Heart left ventricle (tissue), 16 donors: ENCODE measurements at regions of chr14 and their contacts with region 1.

Region 1: GRCh38 chr14:67240978-67241414 is 239 bp upstream of the PALS1 start:
- DNase-seq: peak; percentile 97 to 98 (median 98)
- ATAC-seq: peak; percentile 98 to 99 (median 99)
- H3K4me3 ChIP-seq: peak overlapping the region; percentile 74 to 98 (median 91)
- H3K27ac ChIP-seq: peak overlapping the region; percentile 92 to 99 (median 96)
- H3K4me1 ChIP-seq: peaks cover 0 to 23% (median 10%) of the 10 kb centered on the region in 12 donors
- H3K27me3 ChIP-seq: no peaks in the 10 kb centered on the region
- CTCF ChIP-seq: no peak
- POLR2A ChIP-seq: peak in 1 of 2 donors; percentile 65

Region 2: DNA sequence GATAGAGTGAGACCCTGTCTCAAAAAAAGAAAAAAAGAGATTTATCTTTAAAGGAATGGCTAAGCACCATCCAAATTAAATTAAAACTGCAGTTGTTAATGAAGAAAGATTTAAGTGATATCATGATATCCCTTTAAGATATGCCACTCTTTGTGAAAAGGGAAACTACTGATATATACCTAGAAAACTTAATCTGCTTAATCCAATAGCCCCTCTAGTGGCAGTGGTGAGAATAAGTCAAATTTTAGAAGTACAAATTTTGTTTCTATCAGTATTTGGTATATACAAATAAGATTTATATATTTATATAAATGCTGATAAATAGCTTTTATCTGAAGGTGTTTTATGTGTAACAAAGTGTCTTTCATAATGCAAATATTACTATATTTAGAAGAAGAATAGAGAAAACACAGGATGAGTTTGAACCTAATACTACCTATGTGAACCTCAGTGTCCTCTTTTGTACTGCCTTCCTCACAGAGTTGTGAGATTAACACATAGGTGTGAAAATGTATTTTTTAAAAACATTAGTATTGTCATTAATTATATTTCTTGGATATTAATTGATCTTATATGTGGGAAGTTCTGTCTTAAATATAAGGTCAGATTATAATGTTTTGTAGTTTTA is 103.1 kb before region 1 on chr14:
- intact Hi-C with region 1: no loop called
- DNase-seq: no peak
- ATAC-seq: no peak
- H3K4me3 ChIP-seq: no peak overlapping the region
- H3K27ac ChIP-seq: no peak overlapping the region
- H3K4me1 ChIP-seq: no peaks in the 10 kb centered on the region
- H3K27me3 ChIP-seq: no peaks in the 10 kb centered on the region
- CTCF ChIP-seq: peak in 11 of 12 donors; percentile 12 to 44 (median 35)
- POLR2A ChIP-seq: no peak

Region 3: DNA sequence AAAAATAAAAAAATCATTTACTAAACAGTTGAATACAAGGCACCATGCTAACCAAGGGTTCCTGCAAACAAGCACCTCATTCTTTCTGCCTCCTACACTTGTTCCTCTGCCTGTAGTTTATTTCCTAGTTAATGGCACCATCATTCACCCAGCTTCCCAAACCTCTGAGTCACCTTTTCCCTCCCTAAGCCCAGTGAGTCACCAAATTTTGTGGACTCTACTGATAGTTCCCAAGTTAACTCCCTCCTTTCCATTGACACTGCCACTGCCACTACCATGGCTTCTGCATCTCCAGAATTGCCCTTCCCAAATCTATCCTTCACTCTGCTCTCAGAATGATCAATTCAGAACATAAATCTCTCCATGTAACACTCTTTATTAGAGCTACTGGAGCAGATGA is 53.8 kb before region 1 on chr14:
- intact Hi-C with region 1: no loop called
- DNase-seq: no peak
- ATAC-seq: peak in 1 of 4 donors; percentile 56
- H3K4me3 ChIP-seq: no peak overlapping the region
- H3K27ac ChIP-seq: no peak overlapping the region
- H3K4me1 ChIP-seq: peaks cover 0 to 4% (median 0%) of the 10 kb centered on the region in 12 donors
- H3K27me3 ChIP-seq: no peaks in the 10 kb centered on the region
- CTCF ChIP-seq: no peak
- POLR2A ChIP-seq: no peak

Region 4: DNA sequence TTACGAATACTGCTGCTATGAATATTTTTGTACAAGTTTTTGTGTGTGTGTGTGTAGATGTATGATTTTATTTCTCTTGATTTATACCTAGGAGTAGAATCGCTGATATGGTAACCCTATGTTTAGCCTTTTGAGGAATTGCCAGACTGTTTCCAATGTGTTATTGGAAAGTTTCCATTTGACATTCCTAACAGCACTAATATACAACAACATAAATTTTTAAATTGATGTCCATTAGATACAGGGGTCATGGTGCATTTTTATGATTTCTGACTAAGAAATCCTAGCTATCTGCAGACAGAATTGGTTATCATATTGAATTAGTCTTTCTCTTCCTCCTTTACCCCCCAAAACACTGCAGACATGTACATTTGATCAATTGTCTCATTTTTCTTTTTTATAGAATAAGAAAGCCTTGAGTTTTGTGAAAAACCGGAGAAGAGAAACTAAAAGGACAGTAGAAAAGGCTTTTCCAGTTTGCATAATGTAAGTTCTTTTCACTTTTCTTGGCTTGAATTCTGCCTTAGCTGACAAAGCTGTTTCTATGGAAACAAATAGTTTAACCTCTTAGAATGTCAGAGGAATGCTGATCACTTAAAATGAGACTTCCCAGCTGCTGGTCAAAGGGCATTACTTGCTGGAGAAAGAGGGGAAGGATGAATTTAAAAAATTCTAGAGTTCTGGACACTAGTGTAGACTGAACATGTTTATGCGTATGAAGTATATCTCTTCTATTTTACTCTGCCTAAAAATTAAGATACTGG is 28.5 kb after region 1 on chr14:
- intact Hi-C with region 1: loop called in 1 of 10 experiments (anchors 2 kb)
- DNase-seq: peak in 1 of 5 donors; percentile 21
- ATAC-seq: peak in 3 of 4 donors; percentile 38 to 65 (median 56)
- H3K4me3 ChIP-seq: peak overlapping the region in 5 of 12 donors; percentile 11 to 39 (median 30)
- H3K27ac ChIP-seq: peak overlapping the region in 6 of 12 donors; percentile 5 to 78 (median 30)
- H3K4me1 ChIP-seq: peaks cover 0 to 46% (median 33%) of the 10 kb centered on the region in 12 donors
- H3K27me3 ChIP-seq: no peaks in the 10 kb centered on the region
- CTCF ChIP-seq: no peak
- POLR2A ChIP-seq: no peak

Region 5: DNA sequence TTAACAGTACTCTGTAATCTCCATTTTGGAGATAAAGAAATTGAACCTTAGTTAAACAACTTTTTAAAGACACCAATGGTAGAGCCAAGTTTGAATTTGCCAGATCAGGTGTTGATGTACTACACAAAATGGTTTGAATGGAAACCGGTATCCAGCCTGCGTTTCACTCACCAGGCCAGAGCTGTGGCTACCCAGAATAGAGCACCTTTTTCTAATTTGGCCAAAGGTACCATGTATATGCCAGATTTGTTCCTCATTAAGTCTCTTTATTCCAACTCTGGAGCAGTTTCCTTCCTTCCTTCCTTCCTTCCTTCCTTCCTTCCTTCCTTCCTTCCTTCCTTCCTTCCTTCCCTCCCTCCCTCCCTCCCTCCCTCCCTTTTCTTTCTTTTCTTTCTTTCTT is 39.5 kb after region 1 on chr14:
- intact Hi-C with region 1: loop called in 1 of 10 experiments (anchors 5 kb)
- DNase-seq: no peak
- ATAC-seq: no peak
- H3K4me3 ChIP-seq: no peak overlapping the region
- H3K27ac ChIP-seq: no peak overlapping the region
- H3K4me1 ChIP-seq: peaks cover 0 to 26% (median 7%) of the 10 kb centered on the region in 12 donors
- H3K27me3 ChIP-seq: no peaks in the 10 kb centered on the region
- CTCF ChIP-seq: no peak
- POLR2A ChIP-seq: no peak

Region 6: DNA sequence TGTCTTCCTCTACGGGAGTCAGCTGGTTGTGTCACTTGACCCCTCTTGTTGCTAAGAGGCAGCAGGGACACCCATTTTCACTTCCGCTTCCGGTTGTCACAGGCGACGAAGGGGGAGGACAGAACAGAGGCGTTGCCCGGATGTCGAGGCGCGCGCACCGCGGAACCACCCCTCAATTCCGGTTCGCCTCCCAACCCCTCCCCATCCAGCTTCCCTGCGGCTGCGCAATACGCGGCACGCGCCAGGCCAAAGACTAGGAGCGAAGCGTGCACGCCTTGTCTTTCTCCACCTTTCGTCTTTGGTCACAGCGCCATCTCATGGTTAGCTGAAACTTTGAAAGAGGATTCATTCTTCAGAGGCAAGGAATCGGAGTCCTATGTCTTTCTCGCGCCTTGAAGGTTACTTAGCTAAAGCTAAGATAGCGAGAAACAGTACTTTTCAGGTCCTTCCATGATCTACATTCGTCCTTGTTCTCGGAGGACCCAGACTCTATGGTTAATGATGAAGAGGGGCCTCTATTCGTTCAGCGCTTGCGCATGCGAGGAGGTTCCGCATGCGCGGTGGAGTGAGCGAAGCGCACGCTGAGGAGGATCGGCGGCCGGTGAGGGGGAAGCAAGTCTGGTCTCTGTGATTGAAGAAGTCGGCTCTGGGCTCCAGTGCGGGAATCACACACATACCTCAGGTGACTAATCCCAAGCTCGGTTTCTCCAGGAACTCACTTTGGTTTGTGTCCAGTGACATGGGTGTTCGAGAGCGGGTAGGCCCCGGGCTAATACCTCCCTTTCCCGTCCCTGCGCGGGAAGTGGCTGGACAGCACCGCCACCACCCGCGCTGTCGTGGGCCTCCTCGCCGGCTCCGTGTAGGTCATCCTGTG is 119.0 kb after region 1 on chr14 and contains the starts of genes ATP6V1D and EIF2S1:
- intact Hi-C with region 1: loop called in 3 of 10 experiments (anchors 2 to 10 kb)
- DNase-seq: peak; percentile 99 to 100 (median 100)
- ATAC-seq: peak; percentile 98 to 99 (median 98)
- H3K4me3 ChIP-seq: peak within 1 kb of the TSS; percentile 65 to 92 (median 82)
- H3K27ac ChIP-seq: peak within 1 kb of the TSS; percentile 89 to 99 (median 97)
- H3K4me1 ChIP-seq: peaks cover 9 to 70% (median 56%) of the 10 kb centered on the region in 12 donors
- H3K27me3 ChIP-seq: no peaks in the 10 kb centered on the region
- CTCF ChIP-seq: peak in 11 of 12 donors; percentile 76 to 100 (median 94)
- POLR2A ChIP-seq: peak in 1 of 2 donors; percentile 43
- total RNA-seq, gene ATP6V1D: 106 to 211 (median 167) TPM
- total RNA-seq, gene EIF2S1: 67.3 to 103 (median 91.7) TPM